H1 (cell line): ENCODE measurements at regions of chr7 and their contacts with region 1.

Region 1: GRCh38 chr7:35716038-35716803 is 21.3 kb upstream of the HERPUD2 start:
- DNase-seq: no peak
- H3K4me3 ChIP-seq: no peak overlapping the region
- H3K27ac ChIP-seq: no peak overlapping the region
- H3K4me1 ChIP-seq: peaks cover 0 to 4% (median 2%) of the 10 kb centered on the region in 4 experiments; a peak in 2 of 7 replicates
- H3K27me3 ChIP-seq: no peaks in the 10 kb centered on the region
- CTCF ChIP-seq: no peak
- EP300 ChIP-seq: no peak
- POLR2A ChIP-seq: no peak
- RAD21 ChIP-seq: no peak

Region 2: DNA sequence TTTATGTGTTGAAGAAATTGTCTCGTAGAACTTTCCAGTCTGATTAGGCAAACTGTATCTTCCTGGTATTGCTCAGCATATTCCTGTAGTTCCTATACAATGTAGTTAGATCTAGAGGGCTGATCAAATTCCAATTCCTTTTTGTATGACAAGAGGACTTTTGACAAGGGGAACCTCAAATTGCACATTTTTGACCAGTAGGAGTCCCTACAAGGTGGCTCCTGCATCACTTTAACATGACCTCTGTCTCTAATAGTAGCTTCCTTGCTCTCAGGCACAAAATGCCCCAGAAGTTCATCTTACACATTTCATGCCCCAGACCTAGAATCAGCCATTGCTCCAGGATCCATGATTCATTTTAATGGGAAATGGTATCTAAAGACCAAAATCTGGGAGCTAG is 40.0 kb before region 1 on chr7:
- CTCF ChIA-PET with region 1: no interaction called
- POLR2A ChIA-PET with region 1: no interaction called
- DNase-seq: no peak
- H3K4me3 ChIP-seq: no peak overlapping the region
- H3K27ac ChIP-seq: no peak overlapping the region
- H3K4me1 ChIP-seq: peaks cover 1 to 9% (median 6%) of the 10 kb centered on the region in 4 experiments; a peak in 6 of 7 replicates
- H3K27me3 ChIP-seq: no peaks in the 10 kb centered on the region
- CTCF ChIP-seq: peak in 1 of 3 experiments; percentile 21; a peak in 1 of 4 replicates
- EP300 ChIP-seq: no peak
- POLR2A ChIP-seq: no peak
- RAD21 ChIP-seq: no peak; a peak in 1 of 4 replicates

Region 3: GRCh38 chr7:35694781-35695472 is 21.3 kb before region 1 on chr7 and contains the start of gene HERPUD2:
- CTCF ChIA-PET with region 1: interaction called, 23 read pairs
- POLR2A ChIA-PET with region 1: interaction called, 4 read pairs
- DNase-seq: peak; percentile 79 to 91
- H3K4me3 ChIP-seq: peak within 1 kb of the TSS; percentile 83 to 90 (median 87)
- H3K27ac ChIP-seq: peak within 1 kb of the TSS; percentile 93
- H3K4me1 ChIP-seq: peaks cover 2 to 6% (median 4%) of the 10 kb centered on the region in 4 experiments; a peak in 5 of 7 replicates
- H3K27me3 ChIP-seq: no peaks in the 10 kb centered on the region; a peak in 3 of 7 replicates
- CTCF ChIP-seq: no peak
- EP300 ChIP-seq: peak in 1 of 2 experiments; percentile 23; a peak in 1 of 3 replicates
- POLR2A ChIP-seq: peak; percentile 86 to 93
- RAD21 ChIP-seq: no peak; a peak in 1 of 4 replicates
- total RNA-seq, gene HERPUD2: 15.6 and 18.3 TPM in 2 replicates